ENCODE measurements at regions of chr4 and their contacts with region 1.

Region 1: DNA sequence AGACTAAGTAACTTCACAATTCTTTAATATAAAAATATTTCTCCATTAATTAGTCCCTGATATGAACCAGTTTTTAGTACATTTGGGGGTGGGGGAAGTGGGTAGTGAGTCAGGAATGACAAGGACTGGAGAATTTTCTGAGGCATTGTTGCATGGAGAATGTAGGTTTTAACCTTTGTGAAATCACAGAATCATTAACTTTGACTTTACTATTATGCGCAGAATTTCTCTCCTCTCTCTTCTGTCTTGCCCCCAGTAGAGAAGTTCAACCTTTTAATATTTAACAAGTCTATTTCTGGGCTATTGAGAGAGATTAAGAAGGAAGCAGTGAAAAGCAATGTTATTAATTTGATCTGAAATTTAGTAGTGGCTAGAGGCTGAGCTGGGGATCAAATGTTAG is 597.0 kb downstream of the PCDH18 start:
- DNase-seq: no peak
- H3K4me3 ChIP-seq: no peak overlapping the region
- H3K27ac ChIP-seq: no peak overlapping the region
- H3K4me1 ChIP-seq: no peaks in the 10 kb centered on the region
- H3K27me3 ChIP-seq: no peaks in the 10 kb centered on the region
- CTCF ChIP-seq: no peak
- EP300 ChIP-seq: no peak
- POLR2A ChIP-seq: no peak

Region 2: DNA sequence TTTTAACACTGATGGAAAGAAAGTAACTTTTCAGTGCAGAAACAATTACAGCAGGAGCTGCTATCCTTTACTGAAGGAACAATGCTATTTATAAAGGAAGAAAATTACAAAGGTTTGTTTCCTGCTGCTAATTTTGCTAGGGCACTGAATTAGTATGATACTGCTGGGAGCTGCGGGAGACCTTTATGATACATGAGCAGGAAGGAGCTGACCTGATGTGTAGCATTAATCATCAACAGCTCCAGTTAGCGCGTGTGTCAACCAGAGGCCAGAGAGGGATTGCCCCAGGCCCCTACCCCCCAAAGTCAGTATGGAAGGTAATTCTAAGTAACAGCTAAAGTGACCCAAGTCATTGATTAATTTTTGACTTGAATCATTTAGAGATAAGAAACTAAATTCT is 131.9 kb before region 1 on chr4:
- in situ Hi-C with region 1: no loop called
- intact Hi-C with region 1: no loop called
- DNase-seq: no peak
- H3K4me3 ChIP-seq: no peak overlapping the region
- H3K27ac ChIP-seq: no peak overlapping the region
- H3K4me1 ChIP-seq: no peaks in the 10 kb centered on the region
- H3K27me3 ChIP-seq: no peaks in the 10 kb centered on the region
- CTCF ChIP-seq: no peak
- EP300 ChIP-seq: no peak
- POLR2A ChIP-seq: no peak

Region 3: DNA sequence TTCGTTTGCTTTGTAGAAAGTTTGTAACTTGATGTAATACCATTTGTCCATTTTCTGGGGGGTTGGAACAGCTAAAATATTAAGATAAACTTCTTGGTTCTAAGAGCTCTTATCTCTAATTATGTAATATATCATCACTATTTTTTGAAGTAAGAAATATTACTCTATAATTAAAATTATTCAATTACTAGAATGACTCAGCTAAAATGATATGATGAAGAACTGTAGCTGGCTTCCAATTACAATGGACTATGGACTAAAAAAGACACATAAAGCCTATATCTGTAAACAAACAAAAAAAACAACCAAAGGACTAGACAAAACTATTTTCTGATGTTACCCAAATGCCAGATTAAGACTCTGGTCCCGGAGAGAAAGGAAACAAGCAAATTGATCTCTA is 27.6 kb after region 1 on chr4:
- in situ Hi-C with region 1: no loop called
- intact Hi-C with region 1: loop called (anchors 2 kb)
- DNase-seq: no peak
- H3K4me3 ChIP-seq: no peak overlapping the region
- H3K27ac ChIP-seq: no peak overlapping the region
- H3K4me1 ChIP-seq: no peaks in the 10 kb centered on the region
- H3K27me3 ChIP-seq: no peaks in the 10 kb centered on the region
- CTCF ChIP-seq: no peak
- EP300 ChIP-seq: no peak
- POLR2A ChIP-seq: no peak